Right ventricle myocardium inferior (tissue), 1 donor: ENCODE measurements at regions of chr9 and their contacts with region 1.

Region 1: DNA sequence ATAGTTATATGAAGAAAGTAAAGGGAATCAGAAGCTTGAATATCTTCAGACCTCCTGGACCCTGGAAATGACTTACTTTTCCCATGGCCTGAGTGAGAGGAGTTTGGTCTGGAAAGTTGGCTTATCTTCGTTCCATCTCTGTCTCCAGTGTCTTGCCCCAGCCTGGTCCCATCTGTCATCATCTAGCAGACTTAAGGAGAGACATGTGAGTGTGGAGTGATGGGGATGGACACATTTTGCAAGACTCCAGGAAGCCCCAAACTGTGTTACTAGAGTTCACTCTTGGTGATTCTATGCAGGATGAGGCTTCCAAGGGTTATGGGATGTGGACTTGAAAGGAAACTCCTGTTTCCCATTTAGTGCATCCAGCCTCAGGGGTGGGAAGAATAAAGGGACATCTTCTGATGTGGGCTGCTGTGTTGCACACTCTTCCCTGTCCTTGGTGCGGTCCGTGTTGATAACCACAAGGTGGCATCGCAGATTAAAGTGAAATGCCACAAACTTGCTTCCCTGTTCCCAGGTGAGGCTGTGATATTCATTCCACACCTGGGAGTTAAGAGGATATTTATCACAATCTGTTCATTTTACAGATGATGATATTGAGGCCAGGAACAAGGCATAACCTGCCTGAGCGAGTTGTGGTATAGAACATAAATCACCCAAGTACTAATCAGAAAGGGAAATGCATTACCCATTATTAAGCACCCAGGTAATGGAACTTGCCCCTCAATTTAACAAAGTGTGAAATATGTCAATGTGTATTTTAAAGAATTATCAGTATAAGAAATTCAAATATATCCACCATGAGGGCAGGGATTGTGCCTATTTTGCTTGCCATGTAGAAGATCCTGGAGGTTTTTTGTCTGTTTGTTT is 269.9 kb upstream of the PAPPA start:
- DNase-seq: no peak
- ATAC-seq: peak; percentile 71

Region 2: DNA sequence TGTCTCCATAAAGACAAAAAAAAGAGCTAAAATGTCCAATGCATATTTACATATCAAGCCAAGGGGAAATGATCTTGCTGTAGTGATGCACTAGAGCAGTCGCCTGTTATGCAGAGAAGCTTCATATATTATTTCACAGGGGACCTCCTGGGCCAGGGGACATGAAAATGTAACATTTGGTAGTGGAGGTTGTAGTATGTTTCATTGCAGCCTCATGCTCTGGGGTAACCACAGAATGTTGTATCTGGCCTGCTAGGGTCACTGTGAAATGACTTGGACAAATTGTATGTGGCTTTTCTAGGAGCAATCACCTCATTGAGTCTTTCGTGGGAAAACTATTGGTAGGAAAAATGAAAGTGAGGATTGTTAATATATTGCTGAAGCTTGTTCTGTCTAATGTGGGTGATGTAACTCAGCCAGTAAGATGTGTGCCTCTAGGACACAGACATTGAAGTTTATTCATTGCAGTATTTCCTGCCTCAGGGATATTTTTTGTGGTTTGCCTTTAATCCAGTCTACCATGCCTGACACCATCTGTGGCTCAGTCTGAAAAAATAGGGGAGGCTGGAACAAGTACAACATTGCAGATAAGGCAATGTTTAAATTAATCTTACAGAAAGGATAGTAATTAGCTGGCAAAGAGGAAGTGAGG is 335.0 kb before region 1 on chr9:
- intact Hi-C with region 1: no loop called
- DNase-seq: no peak
- ATAC-seq: no peak

Region 3: DNA sequence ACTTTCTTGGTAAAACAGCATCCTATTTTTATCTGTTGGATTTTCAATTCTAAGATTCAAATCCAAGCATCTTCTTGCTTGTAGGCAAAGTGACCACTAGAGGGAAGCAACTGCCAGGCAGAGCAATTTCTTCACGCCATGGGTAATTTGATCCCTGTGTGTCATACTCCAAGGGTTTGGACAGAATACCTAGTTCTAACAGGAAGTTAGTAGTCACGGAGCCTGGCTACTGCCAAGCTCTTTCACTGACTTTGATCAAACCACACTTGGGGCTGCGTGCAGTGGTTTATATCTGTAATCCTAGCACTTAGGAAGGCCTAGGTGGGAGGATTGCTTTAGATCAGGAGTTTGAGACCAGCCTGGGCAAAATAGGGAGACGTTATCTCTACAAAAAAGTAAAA is 292.1 kb before region 1 on chr9:
- intact Hi-C with region 1: loop called (anchors 10 kb)
- DNase-seq: no peak
- ATAC-seq: peak; percentile 78

Region 4: GRCh38 chr9:116000748-116001329 is 117.1 kb after region 1 on chr9:
- intact Hi-C with region 1: loop called (anchors 5 kb)
- DNase-seq: no peak
- ATAC-seq: no peak

Region 5: DNA sequence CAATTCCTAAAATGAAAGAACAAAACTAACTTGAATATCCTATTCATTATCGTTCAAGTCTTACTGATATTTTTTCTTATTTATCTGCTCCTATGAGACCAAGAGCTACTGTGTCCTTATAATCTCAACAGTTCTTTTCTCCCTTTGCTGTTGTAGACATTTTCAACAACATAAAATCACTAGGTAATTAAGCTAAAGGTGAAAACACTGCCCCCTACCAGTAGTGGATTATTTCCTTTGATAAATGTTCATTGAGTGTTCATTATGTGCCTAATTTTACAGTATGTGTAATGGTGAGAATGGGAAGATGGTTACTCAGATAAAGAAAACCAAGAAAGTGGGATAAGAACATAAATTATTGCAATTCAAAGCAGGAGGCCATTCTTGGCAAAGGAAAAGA is 228.5 kb after region 1 on chr9:
- intact Hi-C with region 1: loop called (anchors 5 kb)
- DNase-seq: no peak
- ATAC-seq: no peak

Region 6: GRCh38 chr9:116149844-116150243 is 266.2 kb after region 1 on chr9:
- intact Hi-C with region 1: loop called (anchors 5 kb)
- DNase-seq: no peak
- ATAC-seq: peak; percentile 21

Region 7: GRCh38 chr9:116661037-116661954 is 777.6 kb after region 1 on chr9:
- intact Hi-C with region 1: loop called (anchors 10 kb)
- DNase-seq: no peak
- ATAC-seq: peak; percentile 83